Activated B cell treated with CpG ODN at 0.5 μM for 24 hours (primary cell): ENCODE measurements at regions of chr10 and their contacts with region 1.

Region 1: DNA sequence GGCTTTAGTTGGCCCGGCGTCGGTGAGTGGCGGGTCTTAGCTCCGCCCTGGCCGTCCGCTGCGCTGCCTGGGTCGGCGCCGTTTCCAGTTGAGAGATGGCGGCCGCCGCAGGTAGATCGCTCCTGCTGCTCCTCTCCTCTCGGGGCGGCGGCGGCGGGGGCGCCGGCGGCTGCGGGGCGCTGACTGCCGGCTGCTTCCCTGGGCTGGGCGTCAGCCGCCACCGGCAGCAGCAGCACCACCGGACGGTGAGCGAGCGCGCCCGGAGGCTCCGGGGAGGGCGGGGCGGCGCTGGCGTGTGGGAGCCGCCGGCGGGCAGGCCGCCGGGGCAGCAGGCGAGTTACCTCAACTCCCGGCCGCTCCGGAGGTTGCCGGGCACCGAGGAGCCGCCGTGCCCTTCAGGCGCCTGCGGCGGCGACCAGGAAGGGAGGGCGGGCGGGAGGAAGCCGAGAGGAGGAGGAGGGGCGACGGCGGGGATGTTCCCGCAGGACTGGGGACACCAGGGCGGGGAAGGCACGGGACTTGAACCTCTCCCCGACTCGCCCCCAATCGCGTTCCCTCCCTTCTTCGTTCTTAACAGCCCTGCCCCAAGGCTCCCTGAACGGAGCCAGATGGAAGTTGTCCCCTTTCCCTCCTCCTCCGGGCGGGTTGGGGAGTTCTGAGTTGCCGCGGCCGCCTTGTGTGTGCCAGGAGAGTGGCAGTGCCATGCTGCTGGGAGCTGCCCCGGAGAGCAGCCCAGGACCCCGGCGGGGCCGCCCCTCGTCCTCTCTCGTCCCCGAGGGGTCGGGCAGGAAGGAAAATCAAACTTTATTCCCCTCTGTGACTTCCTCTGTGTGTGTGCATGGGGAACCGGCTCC is at the start of gene MCU:
- DNase-seq: peak; percentile 90
- ATAC-seq: peak; percentile 96
- H3K4me3 Mint-ChIP-seq: peak within 1 kb of the TSS; percentile 90
- H3K27ac Mint-ChIP-seq: peak within 1 kb of the TSS; percentile 81
- H3K4me1 Mint-ChIP-seq: peaks cover 44% of the 10 kb centered on the region
- H3K27me3 Mint-ChIP-seq: no peaks in the 10 kb centered on the region
- CTCF ChIP-seq: no peak
- total RNA-seq, gene MCU: 13.8 and 15.5 TPM in 2 replicates

Region 2: GRCh38 chr10:72354478-72355213 is 337.6 kb before region 1 on chr10 and contains the start of gene DNAJB12:
- CTCF ChIA-PET with region 1: no interaction called
- POLR2A ChIA-PET with region 1: interaction called, 5 read pairs
- intact Hi-C with region 1: loop called (anchors 2 kb)
- DNase-seq: peak; percentile 89
- ATAC-seq: peak; percentile 84
- H3K4me3 Mint-ChIP-seq: peak within 1 kb of the TSS; percentile 99
- H3K27ac Mint-ChIP-seq: peak within 1 kb of the TSS; percentile 99
- H3K4me1 Mint-ChIP-seq: peaks cover 35% of the 10 kb centered on the region
- H3K27me3 Mint-ChIP-seq: no peaks in the 10 kb centered on the region
- CTCF ChIP-seq: no peak
- total RNA-seq, gene DNAJB12: 39.0 and 39.9 TPM in 2 replicates

Region 3: GRCh38 chr10:72567884-72568640 is 124.2 kb before region 1 on chr10:
- CTCF ChIA-PET with region 1: no interaction called
- POLR2A ChIA-PET with region 1: no interaction called
- intact Hi-C with region 1: loop called (anchors 2 kb)
- DNase-seq: no peak
- ATAC-seq: no peak
- H3K4me3 Mint-ChIP-seq: no peak overlapping the region
- H3K27ac Mint-ChIP-seq: no peak overlapping the region
- H3K4me1 Mint-ChIP-seq: peaks cover 11% of the 10 kb centered on the region
- H3K27me3 Mint-ChIP-seq: no peaks in the 10 kb centered on the region
- CTCF ChIP-seq: no peak

Region 4: DNA sequence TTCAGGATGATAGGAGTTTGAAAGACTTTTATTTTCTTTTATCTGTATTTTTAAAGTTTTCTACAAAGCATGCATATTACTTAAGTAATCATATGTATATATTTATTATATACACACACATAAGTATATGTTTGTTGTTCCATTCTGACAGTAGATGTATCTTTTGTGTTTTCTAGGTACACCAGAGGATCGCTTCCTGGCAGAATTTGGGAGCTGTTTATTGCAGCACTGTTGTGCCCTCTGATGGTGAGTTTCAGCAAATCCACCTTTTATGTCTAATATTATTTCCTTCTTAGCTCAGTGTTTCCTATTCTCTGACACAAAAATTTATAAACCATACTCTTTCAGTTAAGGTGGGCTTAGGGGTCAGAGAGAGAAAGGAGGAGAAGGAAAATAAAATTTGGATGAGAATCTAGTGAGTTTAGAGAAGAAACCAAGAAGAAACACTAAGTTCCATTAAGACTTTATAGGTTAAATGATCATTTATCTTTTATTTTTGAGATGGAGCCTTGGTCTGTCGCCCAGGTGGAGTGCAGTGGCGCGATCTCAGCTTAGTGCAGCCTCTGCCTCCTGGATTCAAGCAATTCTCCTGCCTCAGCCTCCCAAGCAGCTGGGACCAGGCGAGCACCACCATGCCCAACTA is 142.0 kb after region 1 on chr10:
- CTCF ChIA-PET with region 1: interaction called, 4 read pairs
- POLR2A ChIA-PET with region 1: interaction called, 7 read pairs
- intact Hi-C with region 1: loop called (anchors 2 kb)
- DNase-seq: no peak
- ATAC-seq: peak; percentile 34
- H3K4me3 Mint-ChIP-seq: no peak overlapping the region
- H3K27ac Mint-ChIP-seq: no peak overlapping the region
- H3K4me1 Mint-ChIP-seq: no peaks in the 10 kb centered on the region
- H3K27me3 Mint-ChIP-seq: no peaks in the 10 kb centered on the region
- CTCF ChIP-seq: no peak